ENCODE measurements at regions of chr20 and their contacts with region 1.

Region 1: GRCh38 chr20:1900321-1900801 is 5.2 kb downstream of the SIRPA start:
- DNase-seq: no peak
- ATAC-seq: peak; percentile 70
- H3K4me3 ChIP-seq: no peak overlapping the region
- H3K27ac ChIP-seq: no peak overlapping the region
- H3K4me1 ChIP-seq: peaks cover 35% of the 10 kb centered on the region
- H3K27me3 ChIP-seq: no peaks in the 10 kb centered on the region
- CTCF ChIP-seq: peak; percentile 61 to 69 (median 62)
- EP300 ChIP-seq: no peak
- POLR2A ChIP-seq: no peak
- RAD21 ChIP-seq: peak; percentile 54

Region 2: GRCh38 chr20:496126-496696 is 1404.2 kb before region 1 on chr20:
- CTCF ChIA-PET with region 1: no interaction called
- POLR2A ChIA-PET with region 1: no interaction called
- RAD21 ChIA-PET with region 1: no interaction called
- SMC1A ChIA-PET with region 1: no interaction called
- in situ Hi-C with region 1: no loop called
- intact Hi-C with region 1: no loop called
- DNase-seq: no peak
- ATAC-seq: no peak
- H3K4me3 ChIP-seq: no peak overlapping the region
- H3K27ac ChIP-seq: no peak overlapping the region
- H3K4me1 ChIP-seq: no peaks in the 10 kb centered on the region
- H3K27me3 ChIP-seq: no peaks in the 10 kb centered on the region
- CTCF ChIP-seq: no peak
- EP300 ChIP-seq: no peak
- POLR2A ChIP-seq: no peak
- RAD21 ChIP-seq: no peak

Region 3: GRCh38 chr20:1844325-1845162 is 55.8 kb before region 1 on chr20:
- CTCF ChIA-PET with region 1: no interaction called
- POLR2A ChIA-PET with region 1: interaction called, 3 read pairs
- RAD21 ChIA-PET with region 1: no interaction called
- SMC1A ChIA-PET with region 1: interaction called, 11 read pairs
- in situ Hi-C with region 1: no loop called
- intact Hi-C with region 1: no loop called
- DNase-seq: peak; percentile 80
- ATAC-seq: peak; percentile 99
- H3K4me3 ChIP-seq: no peak overlapping the region
- H3K27ac ChIP-seq: peak overlapping the region; percentile 29; the same call in 1 of the 2 replicates
- H3K4me1 ChIP-seq: peaks cover 21% of the 10 kb centered on the region
- H3K27me3 ChIP-seq: no peaks in the 10 kb centered on the region
- CTCF ChIP-seq: no peak
- EP300 ChIP-seq: peak; percentile 66 to 78; a peak in 3 of 4 replicates
- POLR2A ChIP-seq: no peak
- RAD21 ChIP-seq: 0 out of 2 replicates have a peak, but pooled peaks have one; percentile 2

Region 4: GRCh38 chr20:2101865-2102584 is 201.7 kb after region 1 on chr20:
- CTCF ChIA-PET with region 1: no interaction called
- POLR2A ChIA-PET with region 1: interaction called, 4 read pairs
- RAD21 ChIA-PET with region 1: no interaction called
- SMC1A ChIA-PET with region 1: no interaction called
- in situ Hi-C with region 1: no loop called
- intact Hi-C with region 1: loop called (anchors 10 kb)
- DNase-seq: peak; percentile 66
- ATAC-seq: peak; percentile 91
- H3K4me3 ChIP-seq: peak overlapping the region; percentile 92
- H3K27ac ChIP-seq: peak overlapping the region; percentile 100
- H3K4me1 ChIP-seq: peaks cover 11% of the 10 kb centered on the region; the same call in 1 of the 2 replicates
- H3K27me3 ChIP-seq: no peaks in the 10 kb centered on the region
- CTCF ChIP-seq: no peak
- EP300 ChIP-seq: no peak
- POLR2A ChIP-seq: peak; percentile 93
- RAD21 ChIP-seq: no peak

Measured in GM12878 (cell line).